Activated B cell treated with CpG ODN at 0.5 μM for 24 hours (primary cell): ENCODE measurements at regions of chr3 and their contacts with region 1.

Region 1: GRCh38 chr3:105812194-105812586 is 56.6 kb downstream of the CBLB start:
- DNase-seq: no peak
- ATAC-seq: no peak
- H3K4me3 Mint-ChIP-seq: no peak overlapping the region
- H3K27ac Mint-ChIP-seq: peak overlapping the region; percentile 24
- H3K4me1 Mint-ChIP-seq: peaks cover 52% of the 10 kb centered on the region
- H3K27me3 Mint-ChIP-seq: no peaks in the 10 kb centered on the region
- CTCF ChIP-seq: no peak

Region 2: DNA sequence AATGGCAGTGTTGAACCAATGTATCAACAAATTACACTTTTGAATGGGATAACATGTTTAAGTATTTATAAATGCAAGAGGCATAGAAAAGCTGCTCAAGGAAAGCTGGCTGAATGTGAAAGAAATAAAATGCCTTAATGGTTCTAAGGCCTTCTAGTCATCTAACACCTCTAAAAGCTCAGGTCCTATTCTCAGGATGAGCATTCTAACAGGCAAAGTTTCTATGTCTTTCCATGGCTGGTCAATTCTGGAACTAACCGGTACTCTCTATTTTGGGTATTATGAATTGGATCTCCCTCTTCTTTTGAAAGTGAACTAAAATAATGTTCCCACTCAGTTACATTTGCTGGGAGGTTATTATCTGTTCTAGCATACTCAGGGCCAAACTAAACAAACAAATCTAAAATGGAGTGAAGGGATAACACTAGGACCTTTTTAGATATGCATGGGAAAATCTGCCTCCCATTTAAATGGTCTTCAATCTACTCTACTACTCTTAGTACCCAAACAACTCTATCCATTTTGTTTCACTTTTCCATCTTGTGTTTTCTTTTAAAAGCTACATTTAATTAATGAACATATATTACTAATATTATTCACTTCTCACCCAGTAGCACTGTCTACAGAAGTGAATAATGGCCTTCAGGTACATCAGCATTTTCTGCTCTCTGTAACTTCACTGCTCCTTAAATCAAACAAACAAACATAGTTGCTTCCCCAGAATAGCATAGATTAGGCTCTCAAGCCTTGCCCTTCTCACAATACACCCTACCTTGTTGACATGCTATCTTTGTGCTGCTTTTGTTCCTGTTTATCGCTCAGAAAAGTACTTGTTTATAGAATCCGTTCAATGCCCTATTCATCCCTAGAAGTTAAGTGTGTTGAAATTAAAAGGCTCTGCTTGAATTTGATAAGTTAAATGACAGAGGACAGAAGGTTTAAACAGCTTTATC is 10.3 kb after region 1 on chr3:
- CTCF ChIA-PET with region 1: no interaction called
- POLR2A ChIA-PET with region 1: interaction called, 3 read pairs
- intact Hi-C with region 1: loop called (anchors 1 kb)
- DNase-seq: no peak
- ATAC-seq: no peak
- H3K4me3 Mint-ChIP-seq: peak overlapping the region; percentile 16
- H3K27ac Mint-ChIP-seq: peak overlapping the region; percentile 51
- H3K4me1 Mint-ChIP-seq: peaks cover 60% of the 10 kb centered on the region
- H3K27me3 Mint-ChIP-seq: no peaks in the 10 kb centered on the region
- CTCF ChIP-seq: no peak

Region 3: DNA sequence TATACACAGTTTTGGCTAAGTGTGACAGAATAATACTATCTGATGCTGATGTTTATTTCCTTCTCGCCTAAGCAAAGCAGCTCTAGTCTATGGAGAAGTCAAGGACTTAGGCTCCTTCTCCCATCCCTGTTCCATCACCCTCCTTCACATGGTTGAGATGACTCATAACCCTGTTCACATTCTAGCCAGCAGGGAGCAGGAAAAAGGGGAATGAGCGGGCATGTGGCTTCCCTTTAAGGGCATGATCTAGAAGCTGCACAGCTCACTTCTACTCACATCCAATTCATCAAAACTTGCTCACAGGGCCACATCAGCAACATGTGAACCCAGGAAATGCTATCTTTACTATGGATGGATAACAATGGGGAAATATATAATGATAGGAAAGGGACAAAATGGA is 15.8 kb after region 1 on chr3:
- CTCF ChIA-PET with region 1: no interaction called
- POLR2A ChIA-PET with region 1: interaction called, 5 read pairs
- intact Hi-C with region 1: loop called (anchors 2 kb)
- DNase-seq: no peak
- ATAC-seq: no peak
- H3K4me3 Mint-ChIP-seq: no peak overlapping the region
- H3K27ac Mint-ChIP-seq: peak overlapping the region; percentile 50
- H3K4me1 Mint-ChIP-seq: peaks cover 72% of the 10 kb centered on the region
- H3K27me3 Mint-ChIP-seq: no peaks in the 10 kb centered on the region
- CTCF ChIP-seq: no peak